PC-9 (cell line): ENCODE measurements at regions of chr5 and their contacts with region 1.

Region 1: DNA sequence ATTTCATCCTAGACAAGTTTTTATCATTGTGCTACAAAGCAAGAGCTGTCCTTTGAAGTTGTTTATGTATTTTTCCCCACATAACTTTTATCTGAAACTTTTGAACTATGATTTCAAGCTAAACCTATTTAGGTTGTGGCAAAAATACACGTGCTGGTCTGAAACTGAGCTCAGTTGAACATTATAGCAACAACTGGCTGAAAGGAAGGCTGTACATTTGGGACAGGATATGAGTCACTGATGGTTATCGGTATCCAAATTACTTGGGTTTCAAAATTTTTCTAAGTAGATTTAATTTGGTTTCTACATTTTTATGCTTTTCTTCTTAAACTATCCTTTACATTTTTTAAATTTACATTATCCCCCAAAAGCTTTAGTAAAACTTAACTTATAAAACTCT is 627.3 kb upstream of the NUDT12 start:
- DNase-seq: no peak
- H3K4me3 ChIP-seq: no peak overlapping the region
- H3K27ac ChIP-seq: no peak overlapping the region
- H3K4me1 ChIP-seq: no peaks in the 10 kb centered on the region
- H3K27me3 ChIP-seq: no peaks in the 10 kb centered on the region
- CTCF ChIP-seq: no peak

Region 2: DNA sequence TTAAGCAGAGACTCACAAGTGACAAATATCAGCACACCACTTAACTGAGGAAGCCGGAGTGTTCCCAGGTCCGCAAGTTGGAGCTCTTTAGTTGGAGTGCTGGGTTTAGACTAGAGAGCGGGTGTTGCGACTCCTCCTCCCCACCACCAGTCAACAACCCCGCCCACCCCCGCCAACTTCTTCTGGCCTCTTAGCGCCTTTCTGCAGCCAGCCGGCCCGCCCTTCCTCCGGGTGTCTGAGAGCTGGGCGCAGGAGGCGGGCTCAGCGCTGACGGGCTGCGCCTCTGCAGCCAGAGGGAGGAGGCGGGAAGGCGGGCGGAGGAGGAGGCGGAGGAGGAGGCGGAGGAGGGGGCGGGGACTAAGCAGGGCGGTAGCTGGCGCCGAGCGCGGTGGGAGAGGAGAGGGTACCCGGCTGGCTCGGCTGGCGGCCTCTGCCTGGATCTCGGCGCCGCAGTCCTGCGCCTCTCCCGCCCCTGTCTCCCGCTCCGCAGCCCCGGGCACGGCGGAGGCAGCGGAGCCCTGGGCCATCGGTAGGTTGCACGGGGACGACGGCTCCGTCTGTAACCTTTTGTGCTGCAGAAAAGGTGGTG is 931.4 kb before region 1 on chr5 and contains the start of gene MACIR:
- CTCF ChIA-PET with region 1: no interaction called
- POLR2A ChIA-PET with region 1: no interaction called
- intact Hi-C with region 1: no loop called
- DNase-seq: peak; percentile 93 to 97
- H3K4me3 ChIP-seq: peak within 1 kb of the TSS; percentile 90
- H3K27ac ChIP-seq: peak within 1 kb of the TSS; percentile 73
- H3K4me1 ChIP-seq: peaks cover 34% of the 10 kb centered on the region
- H3K27me3 ChIP-seq: no peaks in the 10 kb centered on the region
- CTCF ChIP-seq: no peak
- total RNA-seq, gene MACIR: 21.0 and 28.4 TPM in 2 replicates

Region 3: DNA sequence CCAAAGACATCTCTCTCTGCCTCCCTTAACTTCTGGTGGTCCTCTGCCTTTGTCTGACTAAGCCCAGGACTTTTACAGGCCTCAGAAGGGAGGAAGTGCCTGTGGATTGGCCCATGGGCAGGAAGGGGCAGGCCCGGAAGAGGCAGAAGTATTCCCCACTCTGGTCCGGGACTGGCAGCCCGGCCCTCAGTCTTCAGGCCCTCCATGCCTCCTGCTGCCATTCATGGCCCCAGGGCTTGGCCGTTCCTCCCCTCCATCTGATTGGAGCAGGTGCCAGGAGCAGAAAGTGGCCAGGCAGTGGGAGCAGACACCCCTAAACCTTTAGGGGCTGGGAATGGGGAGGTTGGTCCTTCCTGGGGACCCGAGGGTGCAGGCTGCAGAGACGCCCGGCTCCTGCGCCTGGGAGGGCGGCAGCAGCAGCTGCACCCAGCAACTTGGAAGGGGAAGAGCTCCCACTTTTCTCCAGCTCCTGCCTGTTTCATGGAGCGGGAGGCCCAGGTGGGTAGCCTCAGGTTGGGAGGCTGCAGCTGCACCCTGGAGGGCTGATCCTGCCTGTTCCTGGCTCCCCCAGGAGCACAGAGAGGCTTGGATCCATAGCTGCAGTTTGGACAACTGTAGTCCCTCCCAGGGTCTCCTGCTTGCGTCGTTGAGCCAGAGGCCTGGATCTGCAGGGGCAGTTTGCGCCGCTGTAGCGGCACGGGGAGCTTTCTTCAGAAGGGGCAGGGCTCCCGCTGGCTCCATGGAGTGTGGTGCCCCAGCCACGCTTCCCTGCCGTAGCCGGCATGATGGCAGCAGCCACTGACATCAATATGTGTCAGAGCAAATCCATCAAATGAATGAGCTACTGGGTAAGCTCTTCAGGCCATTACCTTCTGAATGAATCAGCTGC is 34.2 kb after region 1 on chr5:
- CTCF ChIA-PET with region 1: no interaction called
- POLR2A ChIA-PET with region 1: no interaction called
- intact Hi-C with region 1: no loop called
- DNase-seq: no peak
- H3K4me3 ChIP-seq: no peak overlapping the region
- H3K27ac ChIP-seq: no peak overlapping the region
- H3K4me1 ChIP-seq: no peaks in the 10 kb centered on the region
- H3K27me3 ChIP-seq: no peaks in the 10 kb centered on the region
- CTCF ChIP-seq: no peak

Region 4: DNA sequence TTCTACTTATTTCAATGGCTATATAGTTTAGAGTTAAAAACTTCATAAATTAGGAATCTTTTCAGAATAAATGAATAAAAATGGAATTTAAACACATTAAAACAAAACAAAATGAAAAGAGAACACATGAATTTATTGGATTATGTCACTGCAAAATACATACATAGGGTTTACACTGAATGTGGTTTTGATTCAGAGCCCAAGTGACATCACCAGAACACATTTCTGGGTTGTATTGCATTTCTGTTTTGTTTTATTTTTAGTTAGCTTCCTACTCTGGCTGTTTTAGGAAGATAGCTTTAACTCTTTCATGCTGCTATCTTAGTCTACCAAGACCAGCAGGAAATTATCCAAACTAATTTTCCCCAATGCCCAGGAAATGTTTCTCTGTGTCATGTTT is 1545.8 kb after region 1 on chr5:
- CTCF ChIA-PET with region 1: no interaction called
- POLR2A ChIA-PET with region 1: interaction called, 15 read pairs
- intact Hi-C with region 1: no loop called
- DNase-seq: no peak
- H3K4me3 ChIP-seq: no peak overlapping the region
- H3K27ac ChIP-seq: no peak overlapping the region
- H3K4me1 ChIP-seq: no peaks in the 10 kb centered on the region
- H3K27me3 ChIP-seq: no peaks in the 10 kb centered on the region
- CTCF ChIP-seq: no peak